ENCODE measurements at regions of chr1 and their contacts with region 1.

Region 1: GRCh38 chr1:64366821-64367220 is 103.1 kb upstream of the CACHD1 start:
- DNase-seq: no peak
- ATAC-seq: no peak
- H3K4me3 Mint-ChIP-seq: no peak overlapping the region
- H3K27ac Mint-ChIP-seq: no peak overlapping the region
- H3K4me1 Mint-ChIP-seq: no peaks in the 10 kb centered on the region
- H3K27me3 Mint-ChIP-seq: peaks cover 1% of the 10 kb centered on the region

Region 2: GRCh38 chr1:64282354-64282753 is 84.5 kb before region 1 on chr1:
- CTCF ChIA-PET with region 1: no interaction called
- POLR2A ChIA-PET with region 1: no interaction called
- intact Hi-C with region 1: loop called in 1 of 2 experiments (anchors 1 kb)
- DNase-seq: no peak
- ATAC-seq: no peak
- H3K4me3 Mint-ChIP-seq: no peak overlapping the region
- H3K27ac Mint-ChIP-seq: no peak overlapping the region
- H3K4me1 Mint-ChIP-seq: no peaks in the 10 kb centered on the region
- H3K27me3 Mint-ChIP-seq: no peaks in the 10 kb centered on the region

Region 3: GRCh38 chr1:64387389-64388285 is 20.8 kb after region 1 on chr1:
- CTCF ChIA-PET with region 1: interaction called, 3 read pairs
- POLR2A ChIA-PET with region 1: no interaction called
- intact Hi-C with region 1: loop called (anchors 2 kb)
- DNase-seq: no peak
- ATAC-seq: no peak
- H3K4me3 Mint-ChIP-seq: no peak overlapping the region
- H3K27ac Mint-ChIP-seq: no peak overlapping the region
- H3K4me1 Mint-ChIP-seq: no peaks in the 10 kb centered on the region
- H3K27me3 Mint-ChIP-seq: peaks cover 10% of the 10 kb centered on the region